ENCODE measurements at regions of chr6 and their contacts with region 1.

Region 1: DNA sequence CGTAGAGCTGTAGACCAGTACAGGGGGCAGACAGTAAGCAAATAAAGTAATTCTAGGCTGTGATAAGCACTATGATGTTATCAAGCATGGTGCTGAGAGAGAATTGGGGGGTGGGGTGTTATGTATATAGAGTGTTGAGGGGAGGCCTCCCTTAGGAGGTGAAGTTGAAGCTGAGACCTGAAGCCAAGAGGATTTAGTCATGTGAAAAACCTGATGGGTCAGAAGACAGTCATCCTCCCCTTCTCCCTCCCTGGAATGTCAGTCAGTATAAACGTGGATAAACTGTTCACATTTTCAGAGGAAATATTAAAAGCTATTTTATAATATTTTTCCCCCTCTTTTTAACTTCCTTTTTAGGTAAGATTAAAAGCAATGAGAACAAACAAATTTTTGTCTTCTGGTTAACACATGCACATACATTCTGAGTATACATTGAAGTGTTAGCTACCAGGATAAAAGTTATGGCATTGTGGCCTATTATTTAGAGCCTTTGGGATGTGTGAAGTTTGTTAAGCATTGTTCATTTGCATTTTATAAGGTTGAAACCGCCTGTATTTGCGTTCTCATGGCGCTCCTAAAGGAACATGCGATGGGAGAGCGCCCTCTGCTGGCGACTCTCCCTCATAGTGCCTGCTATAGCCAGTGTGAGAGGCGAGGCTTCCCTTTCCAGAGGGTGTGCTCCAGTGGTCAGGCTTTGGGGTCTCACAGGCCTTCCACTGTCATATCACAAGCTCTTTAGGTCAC is 35.4 kb upstream of the MAPK13 start:
- DNase-seq: peak; percentile 69
- CTCF ChIP-seq: peak; percentile 92

Region 2: DNA sequence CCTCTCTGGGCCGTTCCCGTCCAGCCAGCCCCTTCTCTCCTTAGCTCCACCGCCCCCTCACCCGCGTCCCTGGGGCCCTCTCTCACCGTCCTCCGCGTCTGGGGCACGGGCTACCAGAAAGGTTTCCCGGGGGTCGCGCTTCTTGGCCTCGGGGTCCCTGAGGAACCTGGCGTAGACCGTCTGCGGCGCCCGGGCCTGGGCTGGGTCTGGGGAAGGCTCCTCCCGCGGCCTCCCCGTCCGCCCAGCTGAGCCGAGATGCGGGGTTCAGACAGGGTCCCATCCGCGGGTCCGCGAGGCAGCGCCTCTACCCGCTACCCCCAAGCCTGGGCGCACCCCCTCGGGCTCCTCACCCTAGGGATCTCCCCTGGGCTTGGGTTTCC is 583.4 kb before region 1 on chr6:
- CTCF ChIA-PET with region 1: no interaction called
- POLR2A ChIA-PET with region 1: no interaction called
- DNase-seq: no peak
- CTCF ChIP-seq: no peak

Region 3: GRCh38 chr6:35948725-35949124 is 146.2 kb before region 1 on chr6:
- CTCF ChIA-PET with region 1: no interaction called
- POLR2A ChIA-PET with region 1: no interaction called
- DNase-seq: no peak
- CTCF ChIP-seq: no peak

Region 4: DNA sequence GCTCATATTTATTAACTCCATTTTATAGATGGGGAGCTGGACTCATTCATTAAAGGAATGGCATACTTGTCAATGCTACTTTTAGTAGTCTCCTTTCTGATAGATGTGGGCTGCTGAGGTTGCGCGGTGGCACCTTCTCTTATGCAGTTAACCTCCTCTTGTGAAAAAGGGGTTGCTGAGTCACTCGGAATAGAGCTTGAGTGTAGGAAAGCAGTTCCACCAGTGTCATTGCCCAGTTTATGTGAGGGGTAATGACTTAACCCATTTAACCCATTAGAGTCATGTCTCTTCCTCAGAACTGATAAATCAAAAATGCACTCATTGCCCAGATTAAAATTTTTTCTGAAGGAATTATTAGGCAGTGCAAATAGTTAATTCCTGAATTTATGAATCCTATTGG is 61.0 kb before region 1 on chr6:
- CTCF ChIA-PET with region 1: interaction called, 157 read pairs
- POLR2A ChIA-PET with region 1: no interaction called
- DNase-seq: no peak
- CTCF ChIP-seq: no peak

Region 5: DNA sequence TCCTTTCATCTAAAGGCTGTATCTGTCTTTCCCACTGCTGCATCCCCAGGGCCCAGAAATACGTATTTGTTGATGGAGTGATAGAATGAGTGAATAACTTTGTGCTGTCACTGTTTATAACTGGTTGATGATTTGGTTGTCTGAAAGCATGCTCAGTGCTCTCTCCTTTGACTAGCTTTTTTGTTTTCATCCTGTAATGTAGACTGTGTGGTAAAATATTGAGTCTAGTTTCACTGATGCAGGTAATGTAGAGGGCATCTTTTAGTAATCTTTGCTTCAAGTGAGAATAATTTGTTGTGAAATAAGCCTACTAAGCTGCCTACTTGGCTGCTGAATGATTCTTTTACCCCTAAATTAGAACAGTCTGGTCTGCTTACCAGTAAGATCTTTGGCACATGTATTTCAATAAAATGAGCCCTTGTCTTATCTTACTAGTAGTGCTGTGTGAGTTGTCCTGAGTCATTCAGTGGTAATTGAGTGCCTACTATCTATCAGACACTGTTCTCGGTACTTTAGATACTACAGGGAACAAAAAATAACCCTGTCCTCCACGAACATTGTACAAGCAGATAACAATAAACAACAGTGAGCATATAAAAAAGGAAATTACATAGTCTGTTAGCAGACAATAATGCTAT is 27.4 kb before region 1 on chr6:
- CTCF ChIA-PET with region 1: interaction called, 26 read pairs
- POLR2A ChIA-PET with region 1: no interaction called
- DNase-seq: no peak
- CTCF ChIP-seq: no peak

Region 6: DNA sequence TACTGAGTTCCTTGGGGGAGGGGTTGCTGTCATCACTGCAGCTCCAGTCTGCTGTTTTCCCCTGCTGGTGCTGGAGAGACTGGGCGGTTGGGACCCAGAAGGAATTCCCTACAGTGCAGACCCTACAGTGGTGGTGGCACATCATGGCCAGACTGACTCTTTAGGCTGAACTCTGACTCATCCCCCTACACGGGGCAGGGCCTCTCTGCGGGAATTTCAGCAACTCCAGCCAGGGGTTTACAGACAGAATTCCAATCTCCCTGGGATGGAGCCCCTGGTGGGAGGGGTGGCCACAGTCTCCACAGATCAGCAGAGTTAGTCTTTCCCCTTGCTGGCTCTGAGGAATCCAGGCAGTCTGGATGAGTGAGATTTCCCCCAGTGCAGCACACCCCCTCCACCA is 11.5 kb before region 1 on chr6:
- CTCF ChIA-PET with region 1: interaction called, 79 read pairs
- POLR2A ChIA-PET with region 1: no interaction called
- DNase-seq: no peak
- CTCF ChIP-seq: no peak

Region 7: DNA sequence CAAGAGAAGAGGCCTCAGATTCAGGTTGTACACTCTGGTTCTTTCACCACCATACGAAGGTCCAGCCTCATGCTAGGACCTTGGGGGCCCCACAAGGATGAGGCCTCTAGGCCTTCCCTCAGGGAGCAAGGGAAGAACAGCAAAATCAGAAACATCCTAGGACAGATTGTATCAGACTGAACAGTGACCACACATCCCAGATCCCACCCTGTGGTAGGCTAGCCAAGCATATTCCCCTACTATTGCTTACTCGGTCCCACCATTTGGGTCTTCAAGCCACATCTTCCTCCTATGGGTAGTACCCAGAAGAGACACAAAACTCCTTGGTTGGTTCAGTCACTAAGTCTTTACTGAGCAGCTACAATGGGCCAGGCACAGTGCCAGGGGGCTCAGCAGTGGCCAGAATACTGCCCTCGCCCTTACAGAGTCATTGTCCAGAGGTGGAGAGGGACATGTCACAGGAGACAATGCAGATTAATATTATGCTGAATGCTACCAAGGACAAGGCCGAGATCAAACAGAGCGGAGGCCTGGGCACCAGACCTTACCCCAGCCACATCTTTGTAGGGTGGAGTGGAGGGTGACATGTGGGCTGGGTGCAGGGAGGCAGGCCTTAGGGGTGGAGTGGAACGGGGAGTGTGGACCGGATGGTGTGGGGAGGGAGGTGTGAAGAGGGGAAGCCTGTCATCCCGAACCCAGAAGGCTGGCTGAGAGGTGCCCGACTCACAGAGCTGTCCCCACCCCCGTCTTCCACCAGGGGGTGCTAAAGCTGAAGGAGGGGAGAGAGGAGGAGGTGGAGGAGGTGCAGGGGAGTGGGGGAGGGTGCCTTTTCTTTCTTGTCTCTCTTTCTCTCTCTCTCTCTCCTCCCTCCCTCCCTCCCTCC is 28.6 kb after region 1 on chr6:
- CTCF ChIA-PET with region 1: interaction called, 32 read pairs
- POLR2A ChIA-PET with region 1: no interaction called
- DNase-seq: peak; percentile 82
- CTCF ChIP-seq: peak; percentile 91

Region 8: GRCh38 chr6:36184311-36184710 is 89.4 kb after region 1 on chr6:
- CTCF ChIA-PET with region 1: no interaction called
- POLR2A ChIA-PET with region 1: no interaction called
- DNase-seq: no peak
- CTCF ChIP-seq: no peak

Measured in GM10248 (cell line).